Activated naive CD8-positive, alpha-beta T cell treated with anti-CD3 and anti-CD28 coated beads, Interleukin-2, amount 10 ng/mL, durations not matched to agents 7 days and 5 days (primary cell): ENCODE measurements at regions of chr20 and their contacts with region 1.

Region 1: DNA sequence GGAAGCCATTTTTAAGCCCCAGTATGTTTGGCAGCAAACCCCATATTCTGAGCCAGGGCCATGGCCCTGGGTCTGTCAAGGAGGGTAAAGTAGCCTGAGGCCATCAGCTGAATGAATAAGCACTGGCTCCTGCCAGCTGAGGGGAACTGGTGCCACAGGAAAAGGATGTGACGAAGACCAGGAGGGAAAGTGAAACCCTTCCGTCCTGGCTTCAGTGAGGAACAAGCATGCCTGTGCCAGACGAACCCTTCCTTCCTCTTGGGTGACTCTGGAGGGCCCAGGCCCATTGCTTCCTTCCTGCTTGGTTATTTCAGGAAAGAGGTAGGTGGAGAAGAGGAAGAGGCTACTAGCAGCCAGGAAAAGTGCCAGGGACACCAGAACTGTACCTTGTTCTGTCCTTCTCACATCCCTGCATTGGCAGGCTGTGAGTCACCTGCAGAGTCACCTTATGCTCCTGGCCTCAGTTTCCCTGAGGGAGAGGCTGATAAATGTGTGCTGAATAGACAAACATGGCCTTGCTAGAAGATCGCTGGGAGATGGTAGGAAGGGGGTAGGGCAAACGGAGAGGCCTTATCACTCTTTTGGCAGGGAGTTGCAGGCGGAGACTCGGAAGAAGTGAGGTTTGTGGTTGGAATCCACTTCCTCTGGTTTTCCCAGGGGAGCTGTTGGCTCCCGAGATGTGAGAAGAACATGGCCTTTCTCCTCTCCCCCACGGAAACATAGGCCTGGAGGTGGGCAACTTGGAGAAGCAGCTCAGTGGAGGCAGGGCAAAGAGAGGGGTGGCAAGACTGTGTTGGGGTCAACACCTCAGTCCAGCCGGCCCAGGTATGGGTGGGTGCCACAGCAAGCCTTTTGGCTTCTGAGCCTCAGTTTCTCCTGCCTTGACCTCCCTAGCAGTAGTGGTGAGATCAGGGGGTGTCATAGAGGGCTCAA is 37.4 kb downstream of the COX4I2 start:
- DNase-seq: peak; percentile 60
- ATAC-seq: peak; percentile 59
- H3K4me3 Mint-ChIP-seq: peak overlapping the region; percentile 86
- H3K27ac Mint-ChIP-seq: peak overlapping the region; percentile 93
- H3K4me1 Mint-ChIP-seq: peaks cover 70% of the 10 kb centered on the region
- H3K27me3 Mint-ChIP-seq: no peaks in the 10 kb centered on the region

Region 2: DNA sequence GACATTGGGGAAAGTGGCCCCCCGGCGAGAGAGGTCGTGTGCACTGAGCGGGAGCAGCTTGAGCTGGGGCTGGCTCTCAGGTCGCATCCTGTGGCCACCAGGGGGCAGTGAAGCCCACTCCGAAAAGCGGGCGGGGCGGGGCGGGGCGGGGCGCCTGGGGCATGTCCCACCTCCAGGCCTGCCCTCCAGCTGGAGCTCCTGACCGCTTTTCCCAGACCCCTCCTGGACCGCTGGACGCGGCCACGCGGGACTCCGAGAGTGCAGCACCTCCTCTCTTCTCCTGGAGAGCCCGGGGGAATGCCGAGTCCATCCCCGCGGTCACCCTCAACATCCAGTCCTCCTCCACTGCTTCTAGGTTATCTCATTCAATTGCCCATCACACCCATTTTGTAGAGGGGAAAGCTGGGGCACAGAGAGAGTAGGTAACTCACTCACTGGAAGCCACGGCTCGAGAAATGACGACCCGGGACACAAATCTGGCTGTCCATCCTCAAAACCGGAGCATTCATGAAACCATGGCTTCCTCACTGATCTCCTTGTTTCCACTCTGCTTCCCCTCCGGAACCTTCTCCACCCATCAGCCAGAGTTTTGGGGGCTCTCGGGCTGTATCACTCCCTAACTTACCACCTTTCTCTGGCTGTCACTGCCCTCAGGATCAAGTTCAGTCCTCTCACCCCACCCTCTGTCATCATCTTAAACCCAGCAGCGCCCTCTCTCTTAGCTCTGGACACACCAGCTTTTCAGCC is 13.4 kb before region 1 on chr20:
- POLR2A ChIA-PET with region 1: interaction called, 43 read pairs
- DNase-seq: peak; percentile 86
- ATAC-seq: peak; percentile 73
- H3K4me3 Mint-ChIP-seq: peak overlapping the region; percentile 84
- H3K27ac Mint-ChIP-seq: peak overlapping the region; percentile 87
- H3K4me1 Mint-ChIP-seq: peaks cover 42% of the 10 kb centered on the region
- H3K27me3 Mint-ChIP-seq: no peaks in the 10 kb centered on the region

Region 3: DNA sequence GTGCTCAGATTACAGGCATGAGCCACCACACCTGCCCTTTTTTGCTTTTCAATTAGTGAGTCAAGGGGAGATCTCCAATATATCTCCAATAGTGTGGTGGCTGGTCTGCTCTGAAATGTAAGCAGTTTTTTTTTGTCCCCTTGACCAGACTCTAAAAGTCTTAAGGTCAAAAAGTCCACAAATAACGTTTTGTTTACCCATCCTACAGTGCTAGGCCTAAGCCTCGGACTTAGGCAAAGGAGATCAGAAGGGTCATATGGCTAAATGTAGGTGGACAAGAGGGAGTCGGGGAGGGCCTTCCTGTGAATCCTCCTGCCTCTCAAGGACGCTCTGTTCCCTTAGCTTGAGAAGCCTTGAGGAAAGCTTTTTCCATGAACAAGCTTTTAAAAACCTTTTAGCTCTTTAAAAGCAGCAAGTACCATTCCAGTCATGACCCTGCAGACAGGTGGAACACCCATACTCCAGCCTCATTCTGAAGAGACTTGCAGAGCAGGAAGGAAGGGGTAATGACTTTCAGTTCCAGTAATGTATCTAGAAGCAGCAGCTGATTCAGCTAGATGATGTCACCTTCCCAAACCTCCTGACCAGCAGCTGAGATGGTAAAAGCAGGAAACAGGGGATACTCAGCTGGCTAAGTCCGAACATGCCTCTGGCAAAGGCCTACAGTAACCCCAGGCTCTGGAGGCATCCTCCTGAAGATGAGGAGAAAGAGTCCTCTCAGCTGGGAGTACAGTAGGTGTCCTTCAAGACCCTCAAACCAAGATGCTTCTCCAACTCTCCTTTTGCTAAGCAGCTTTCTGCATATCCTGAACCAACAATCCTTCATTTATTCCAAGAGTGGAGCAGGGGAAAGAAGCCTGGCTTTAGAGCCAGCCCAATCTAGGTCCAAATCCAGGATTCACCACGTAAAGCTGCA is 23.9 kb after region 1 on chr20:
- POLR2A ChIA-PET with region 1: interaction called, 12 read pairs
- DNase-seq: no peak
- ATAC-seq: peak; percentile 85
- H3K4me3 Mint-ChIP-seq: peak overlapping the region; percentile 66
- H3K27ac Mint-ChIP-seq: peak overlapping the region; percentile 85
- H3K4me1 Mint-ChIP-seq: peaks cover 57% of the 10 kb centered on the region
- H3K27me3 Mint-ChIP-seq: no peaks in the 10 kb centered on the region